ENCODE measurements at regions of chr12 and their contacts with region 1.

Region 1: DNA sequence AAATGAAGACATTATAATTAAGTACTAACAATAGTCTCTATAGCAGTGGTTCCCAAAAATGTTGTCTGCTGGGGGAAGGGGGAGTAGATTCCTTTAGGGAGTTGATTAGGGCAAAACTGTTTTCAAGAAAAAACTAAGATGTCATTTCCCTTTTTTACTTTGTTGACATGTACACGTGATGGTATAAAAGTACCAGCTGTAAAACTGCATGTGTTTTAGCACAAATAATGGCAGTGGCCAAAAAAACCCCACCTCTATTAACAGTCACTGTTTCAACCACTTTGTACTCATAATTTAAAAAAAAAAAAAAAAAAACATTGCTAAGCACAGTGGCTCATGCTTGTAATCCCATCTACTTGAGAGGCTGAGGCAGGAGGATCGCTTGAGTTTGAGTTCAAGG is 61.7 kb downstream of the PPP1R12A start:
- DNase-seq: no peak
- ATAC-seq: no peak
- H3K4me3 ChIP-seq: no peak overlapping the region
- H3K27ac ChIP-seq: no peak overlapping the region
- H3K4me1 ChIP-seq: peaks cover 3 to 12% of the 10 kb centered on the region in 2 donors
- H3K27me3 ChIP-seq: no peaks in the 10 kb centered on the region
- CTCF ChIP-seq: no peak
- POLR2A ChIP-seq: no peak

Region 2: GRCh38 chr12:79927772-79928474 is 54.7 kb after region 1 on chr12:
- in situ Hi-C with region 1: no loop called
- intact Hi-C with region 1: loop called (anchors 1 kb)
- DNase-seq: no peak
- ATAC-seq: no peak
- H3K4me3 ChIP-seq: no peak overlapping the region
- H3K27ac ChIP-seq: no peak overlapping the region
- H3K4me1 ChIP-seq: peaks cover 23 to 34% of the 10 kb centered on the region in 2 donors
- H3K27me3 ChIP-seq: no peaks in the 10 kb centered on the region
- CTCF ChIP-seq: no peak
- POLR2A ChIP-seq: no peak

Measured in gastrocnemius medialis (tissue), 4 donors.